Activated CD8-positive, alpha-beta memory T cell treated with anti-CD3 and anti-CD28 coated beads, Interleukin-2, amount 10 ng/mL, durations not matched to agents 7 days and 5 days (primary cell): ENCODE measurements at regions of chr4 and their contacts with region 1.

Region 1: GRCh38 chr4:3442959-3443749 is 1.4 kb downstream of the HGFAC start:
- DNase-seq: peak; percentile 68
- ATAC-seq: peak; percentile 82
- H3K4me3 Mint-ChIP-seq: no peak overlapping the region
- H3K27ac Mint-ChIP-seq: no peak overlapping the region
- H3K4me1 Mint-ChIP-seq: no peaks in the 10 kb centered on the region
- H3K27me3 Mint-ChIP-seq: no peaks in the 10 kb centered on the region

Region 2: DNA sequence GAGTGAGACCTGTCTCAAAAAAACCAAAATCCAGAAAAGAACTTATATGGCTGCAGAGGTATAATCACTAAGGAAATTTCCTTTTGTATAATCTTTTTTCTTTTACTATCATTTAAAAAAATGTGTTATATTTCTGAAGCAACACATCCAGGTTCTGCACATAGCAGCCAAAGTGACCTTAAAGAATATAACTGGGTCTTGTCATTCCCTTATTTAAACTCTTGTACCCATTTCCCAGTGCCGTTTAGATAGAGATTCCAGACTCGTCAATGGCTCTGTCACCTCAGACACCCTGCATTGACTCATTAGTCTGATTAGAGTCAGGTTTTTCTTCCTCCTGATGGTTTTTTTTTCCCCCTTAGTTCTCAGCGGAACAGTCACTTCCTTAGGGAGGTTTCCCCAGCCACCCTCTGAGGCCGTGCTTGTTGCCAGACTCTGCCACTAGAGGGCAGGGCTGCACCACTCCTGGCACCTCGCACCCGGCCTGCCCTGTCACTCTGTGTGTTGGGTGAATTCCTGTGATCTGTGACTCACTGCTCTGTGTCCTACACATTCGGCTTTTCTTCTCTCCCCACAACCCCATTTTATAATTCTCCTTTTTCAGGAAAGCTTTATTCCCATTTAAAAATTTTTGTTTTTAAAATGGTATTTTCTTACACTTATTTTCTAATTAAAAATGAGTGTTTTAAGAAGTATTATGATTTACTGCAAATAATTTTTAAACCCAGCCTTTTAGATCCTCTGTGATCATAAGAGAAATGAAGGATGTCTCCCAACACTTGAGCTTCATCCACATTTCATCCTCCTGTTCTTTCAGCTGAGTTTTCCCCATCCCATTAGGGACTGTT is 336.6 kb before region 1 on chr4:
- CTCF ChIA-PET with region 1: interaction called, 17 read pairs
- DNase-seq: peak; percentile 89
- ATAC-seq: peak; percentile 100
- H3K4me3 Mint-ChIP-seq: no peak overlapping the region
- H3K27ac Mint-ChIP-seq: peak overlapping the region; percentile 33
- H3K4me1 Mint-ChIP-seq: peaks cover 6% of the 10 kb centered on the region
- H3K27me3 Mint-ChIP-seq: no peaks in the 10 kb centered on the region

Region 3: DNA sequence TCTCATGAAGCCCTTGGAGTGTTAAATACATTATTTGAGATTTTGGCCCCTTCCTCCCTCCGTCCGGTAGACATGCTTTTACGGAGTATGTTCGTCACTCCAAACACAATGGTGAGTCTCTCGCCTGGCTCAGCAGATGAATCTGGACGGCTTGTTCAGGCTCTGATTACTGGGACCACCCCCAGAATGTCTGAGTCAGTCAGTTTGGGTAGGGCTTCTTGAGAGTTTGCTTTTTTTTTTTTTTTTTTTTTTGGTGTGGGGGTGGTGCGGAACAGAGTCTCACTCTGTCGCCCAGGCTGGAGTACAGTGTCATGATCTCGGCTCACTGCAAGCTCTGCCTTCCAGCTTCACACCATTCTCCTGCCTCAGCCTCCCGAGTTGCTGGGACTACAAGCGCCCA is 256.5 kb before region 1 on chr4:
- CTCF ChIA-PET with region 1: no interaction called
- DNase-seq: no peak
- ATAC-seq: no peak
- H3K4me3 Mint-ChIP-seq: no peak overlapping the region
- H3K27ac Mint-ChIP-seq: no peak overlapping the region
- H3K4me1 Mint-ChIP-seq: peaks cover 11% of the 10 kb centered on the region
- H3K27me3 Mint-ChIP-seq: no peaks in the 10 kb centered on the region

Region 4: DNA sequence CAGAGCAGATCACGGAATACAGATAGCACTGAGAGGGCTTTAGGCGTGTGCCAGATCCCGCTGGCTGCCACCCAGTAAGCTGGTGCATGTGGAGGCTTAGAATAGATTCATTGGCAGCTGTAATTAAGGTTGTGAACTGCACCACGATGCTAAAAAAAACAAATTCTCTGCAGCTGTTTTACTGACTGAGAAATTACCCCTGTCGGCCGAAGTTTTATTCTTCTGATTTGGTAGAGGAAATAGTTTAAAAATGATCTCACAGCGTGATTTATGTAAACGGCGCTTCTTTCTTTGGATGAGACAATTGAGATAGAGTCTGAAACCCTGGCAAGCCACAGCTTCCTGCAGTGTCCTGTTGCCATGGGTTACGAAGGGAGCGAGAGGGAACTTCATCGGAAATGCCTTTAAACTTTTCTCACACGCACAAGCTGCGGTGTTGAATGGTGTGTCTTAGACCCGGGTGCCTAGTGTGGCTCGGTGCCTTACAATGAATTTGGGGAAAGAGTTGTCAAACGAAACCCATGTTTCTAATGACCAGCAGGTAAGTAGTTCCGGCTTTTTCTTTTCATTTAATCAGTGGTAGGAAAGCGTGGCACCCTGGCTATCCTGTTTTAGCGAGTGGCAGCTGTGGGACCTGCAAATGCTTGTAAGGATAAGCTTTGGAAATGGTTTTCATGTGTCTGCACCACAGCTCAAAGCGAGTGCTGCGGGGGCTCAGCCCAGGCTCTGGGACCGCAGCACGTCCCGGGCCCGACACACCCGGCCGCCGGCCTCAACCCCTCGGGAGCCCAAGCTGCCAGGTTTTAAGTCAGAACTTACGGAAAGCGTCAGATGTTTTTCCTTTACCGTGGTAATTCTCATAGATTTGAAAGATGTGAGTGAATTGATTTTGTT is 73.1 kb before region 1 on chr4:
- CTCF ChIA-PET with region 1: no interaction called
- DNase-seq: peak; percentile 54
- ATAC-seq: peak; percentile 59
- H3K4me3 Mint-ChIP-seq: peak overlapping the region; percentile 1
- H3K27ac Mint-ChIP-seq: no peak overlapping the region
- H3K4me1 Mint-ChIP-seq: peaks cover 11% of the 10 kb centered on the region
- H3K27me3 Mint-ChIP-seq: peaks cover 32% of the 10 kb centered on the region